CD4-positive, alpha-beta T cell (primary cell): ENCODE measurements at regions of chr1 and their contacts with region 1.

Region 1: GRCh38 chr1:29181413-29182225 is at the start of gene SRSF4:
- DNase-seq: peak; percentile 97 to 99 (median 99)
- ATAC-seq: peak; percentile 89
- H3K4me3 ChIP-seq: peak within 1 kb of the TSS; percentile 79
- H3K4me3 Mint-ChIP-seq: peak within 1 kb of the TSS; percentile 97
- H3K27ac ChIP-seq: peak within 1 kb of the TSS; percentile 97 to 99
- H3K27ac Mint-ChIP-seq: peak within 1 kb of the TSS; percentile 93
- H3K4me1 ChIP-seq: peaks cover 39% of the 10 kb centered on the region
- H3K4me1 Mint-ChIP-seq: peaks cover 50% of the 10 kb centered on the region
- H3K27me3 ChIP-seq: no peaks in the 10 kb centered on the region
- H3K27me3 Mint-ChIP-seq: no peaks in the 10 kb centered on the region
- CTCF ChIP-seq: peak; percentile 72
- total RNA-seq, gene SRSF4: 89.2 to 93.4 TPM

Region 2: GRCh38 chr1:28248283-28249012 is 933.2 kb before region 1 on chr1:
- CTCF ChIA-PET with region 1: no interaction called
- POLR2A ChIA-PET with region 1: no interaction called
- intact Hi-C with region 1: loop called in 1 of 2 experiments (anchors 5 kb)
- DNase-seq: peak; percentile 70 to 91 (median 78)
- ATAC-seq: peak; percentile 23
- H3K4me3 ChIP-seq: peak overlapping the region; percentile 78
- H3K4me3 Mint-ChIP-seq: peak overlapping the region; percentile 87
- H3K27ac ChIP-seq: peak overlapping the region; percentile 80 to 99
- H3K27ac Mint-ChIP-seq: peak overlapping the region; percentile 86
- H3K4me1 ChIP-seq: peaks cover 54% of the 10 kb centered on the region
- H3K4me1 Mint-ChIP-seq: peaks cover 49% of the 10 kb centered on the region
- H3K27me3 ChIP-seq: no peaks in the 10 kb centered on the region
- H3K27me3 Mint-ChIP-seq: no peaks in the 10 kb centered on the region
- CTCF ChIP-seq: peak; percentile 92

Region 3: GRCh38 chr1:28613175-28613574 is 568.4 kb before region 1 on chr1:
- CTCF ChIA-PET with region 1: no interaction called
- POLR2A ChIA-PET with region 1: no interaction called
- intact Hi-C with region 1: no loop called
- DNase-seq: no peak
- ATAC-seq: no peak
- H3K4me3 ChIP-seq: no peak overlapping the region
- H3K4me3 Mint-ChIP-seq: no peak overlapping the region
- H3K27ac ChIP-seq: no peak overlapping the region
- H3K27ac Mint-ChIP-seq: no peak overlapping the region
- H3K4me1 ChIP-seq: no peaks in the 10 kb centered on the region
- H3K4me1 Mint-ChIP-seq: no peaks in the 10 kb centered on the region
- H3K27me3 ChIP-seq: no peaks in the 10 kb centered on the region
- H3K27me3 Mint-ChIP-seq: no peaks in the 10 kb centered on the region
- CTCF ChIP-seq: no peak

Region 4: GRCh38 chr1:28642847-28643635 is 538.6 kb before region 1 on chr1 and contains the start of gene TAF12:
- CTCF ChIA-PET with region 1: interaction called, 3 read pairs
- POLR2A ChIA-PET with region 1: interaction called, 49 read pairs
- intact Hi-C with region 1: loop called (anchors 2 kb)
- DNase-seq: peak; percentile 87 to 98 (median 92)
- ATAC-seq: peak; percentile 81
- H3K4me3 ChIP-seq: peak within 1 kb of the TSS; percentile 99
- H3K4me3 Mint-ChIP-seq: peak within 1 kb of the TSS; percentile 92
- H3K27ac ChIP-seq: peak within 1 kb of the TSS; percentile 94
- H3K27ac Mint-ChIP-seq: peak within 1 kb of the TSS; percentile 97
- H3K4me1 ChIP-seq: peaks cover 54% of the 10 kb centered on the region
- H3K4me1 Mint-ChIP-seq: peaks cover 62% of the 10 kb centered on the region
- H3K27me3 ChIP-seq: no peaks in the 10 kb centered on the region
- H3K27me3 Mint-ChIP-seq: no peaks in the 10 kb centered on the region
- CTCF ChIP-seq: peak; percentile 63
- total RNA-seq, gene TAF12: 7.0 to 8.0 TPM

Region 5: GRCh38 chr1:28718586-28719331 is 462.9 kb before region 1 on chr1:
- CTCF ChIA-PET with region 1: no interaction called
- POLR2A ChIA-PET with region 1: no interaction called
- intact Hi-C with region 1: no loop called
- DNase-seq: no peak
- ATAC-seq: no peak
- H3K4me3 ChIP-seq: no peak overlapping the region
- H3K4me3 Mint-ChIP-seq: no peak overlapping the region
- H3K27ac ChIP-seq: no peak overlapping the region
- H3K27ac Mint-ChIP-seq: no peak overlapping the region
- H3K4me1 ChIP-seq: no peaks in the 10 kb centered on the region
- H3K4me1 Mint-ChIP-seq: no peaks in the 10 kb centered on the region
- H3K27me3 ChIP-seq: no peaks in the 10 kb centered on the region
- H3K27me3 Mint-ChIP-seq: no peaks in the 10 kb centered on the region
- CTCF ChIP-seq: no peak

Region 6: DNA sequence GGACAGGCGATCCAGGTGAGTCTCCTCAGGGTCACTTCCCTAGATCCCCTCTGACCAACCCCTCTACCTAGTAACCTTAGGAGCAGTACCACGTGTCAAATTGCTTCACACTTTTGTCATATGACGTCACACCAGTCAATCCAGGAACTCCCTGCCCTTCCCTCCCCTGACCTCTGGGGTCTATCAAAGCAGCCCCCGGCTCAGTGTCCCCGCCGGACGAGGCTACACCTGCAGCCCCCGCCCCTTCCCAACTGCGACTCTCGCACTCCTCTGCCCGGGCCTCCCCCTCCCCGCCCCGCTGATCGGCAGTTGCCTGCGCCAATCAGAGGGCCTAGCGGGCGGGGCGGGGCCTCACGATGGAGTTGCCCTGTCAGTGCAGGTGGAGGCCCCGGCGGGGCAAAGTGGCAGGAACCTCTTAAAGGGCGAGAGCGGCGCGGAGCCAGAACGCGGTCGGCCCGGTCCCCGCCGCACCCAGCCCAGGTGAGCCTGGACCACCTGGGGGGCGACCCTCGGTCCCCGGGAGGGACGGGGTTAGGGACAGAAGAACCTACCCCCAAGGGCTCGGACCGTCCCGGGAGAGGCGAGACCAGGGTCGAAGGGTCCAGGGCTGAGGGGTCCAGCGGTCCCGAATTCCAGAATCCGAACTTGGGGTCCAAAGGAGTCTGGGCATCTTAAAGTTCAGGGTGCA is 294.7 kb before region 1 on chr1:
- CTCF ChIA-PET with region 1: interaction called, 5 read pairs
- POLR2A ChIA-PET with region 1: interaction called, 19 read pairs
- intact Hi-C with region 1: loop called in 1 of 2 experiments (anchors 5 kb)
- DNase-seq: peak; percentile 81 to 95 (median 89)
- ATAC-seq: peak; percentile 73
- H3K4me3 ChIP-seq: peak overlapping the region; percentile 99
- H3K4me3 Mint-ChIP-seq: peak overlapping the region; percentile 95
- H3K27ac ChIP-seq: peak overlapping the region; percentile 57 to 76
- H3K27ac Mint-ChIP-seq: peak overlapping the region; percentile 84
- H3K4me1 ChIP-seq: peaks cover 68% of the 10 kb centered on the region
- H3K4me1 Mint-ChIP-seq: peaks cover 51% of the 10 kb centered on the region
- H3K27me3 ChIP-seq: no peaks in the 10 kb centered on the region
- H3K27me3 Mint-ChIP-seq: peaks cover 5% of the 10 kb centered on the region
- CTCF ChIP-seq: no peak

Region 7: DNA sequence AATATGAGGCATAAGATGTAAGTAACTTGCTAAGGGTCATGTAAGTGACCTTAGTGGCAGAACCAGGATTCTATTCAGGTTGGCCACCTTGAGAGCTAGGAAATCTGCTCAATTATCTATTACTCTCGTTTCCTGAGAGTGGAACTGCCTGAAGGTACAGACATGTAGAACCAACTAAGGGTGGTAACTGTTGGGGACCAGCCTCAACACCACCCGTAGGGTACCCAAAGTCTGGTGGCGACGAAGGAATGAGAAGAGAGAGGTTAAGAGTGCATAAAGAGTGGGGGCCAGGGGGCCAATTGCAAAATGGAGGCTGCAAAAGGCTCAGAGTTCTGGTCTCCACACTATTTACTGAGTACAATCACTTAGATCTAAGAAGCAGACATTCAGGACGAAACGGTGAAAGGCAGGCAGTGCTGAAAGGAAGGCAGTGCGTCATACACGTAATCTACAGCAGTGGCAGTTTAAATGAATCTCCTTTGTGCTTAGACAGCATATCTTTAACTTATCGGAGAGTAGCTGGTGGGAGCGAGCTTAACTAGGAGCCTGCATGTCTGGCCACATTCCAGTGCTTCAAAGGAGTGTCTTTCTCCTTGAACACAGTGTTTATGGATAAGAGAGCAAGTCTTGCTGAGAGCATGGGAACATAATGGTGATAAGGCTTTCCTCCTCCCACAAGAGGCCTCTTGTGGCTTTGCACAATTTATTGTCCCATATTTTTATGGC is 24.9 kb before region 1 on chr1:
- CTCF ChIA-PET with region 1: no interaction called
- POLR2A ChIA-PET with region 1: interaction called, 12 read pairs
- intact Hi-C with region 1: no loop called
- DNase-seq: no peak
- ATAC-seq: no peak
- H3K4me3 ChIP-seq: no peak overlapping the region
- H3K4me3 Mint-ChIP-seq: no peak overlapping the region
- H3K27ac ChIP-seq: no peak overlapping the region
- H3K27ac Mint-ChIP-seq: no peak overlapping the region
- H3K4me1 ChIP-seq: no peaks in the 10 kb centered on the region
- H3K4me1 Mint-ChIP-seq: peaks cover 15% of the 10 kb centered on the region
- H3K27me3 ChIP-seq: no peaks in the 10 kb centered on the region
- H3K27me3 Mint-ChIP-seq: no peaks in the 10 kb centered on the region
- CTCF ChIP-seq: no peak

Region 8: GRCh38 chr1:29230553-29231378 is 49.1 kb after region 1 on chr1 and contains the start of gene MECR:
- CTCF ChIA-PET with region 1: interaction called, 8 read pairs
- POLR2A ChIA-PET with region 1: interaction called, 15 read pairs
- intact Hi-C with region 1: no loop called
- DNase-seq: peak; percentile 88 to 97 (median 92)
- ATAC-seq: peak; percentile 94
- H3K4me3 ChIP-seq: peak within 1 kb of the TSS; percentile 96
- H3K4me3 Mint-ChIP-seq: peak within 1 kb of the TSS; percentile 94
- H3K27ac ChIP-seq: peak within 1 kb of the TSS; percentile 10 to 67
- H3K27ac Mint-ChIP-seq: peak within 1 kb of the TSS; percentile 92
- H3K4me1 ChIP-seq: peaks cover 17% of the 10 kb centered on the region
- H3K4me1 Mint-ChIP-seq: peaks cover 24% of the 10 kb centered on the region
- H3K27me3 ChIP-seq: peaks cover 0 to 6% of the 10 kb centered on the region in 2 experiments
- H3K27me3 Mint-ChIP-seq: peaks cover 13% of the 10 kb centered on the region
- CTCF ChIP-seq: no peak
- total RNA-seq, gene MECR: 5.5 to 6.6 TPM